Activated CD4-positive, alpha-beta memory T cell treated with anti-CD3 and anti-CD28 coated beads for 36 hours (primary cell): ENCODE measurements at regions of chr11 and their contacts with region 1.

Region 1: DNA sequence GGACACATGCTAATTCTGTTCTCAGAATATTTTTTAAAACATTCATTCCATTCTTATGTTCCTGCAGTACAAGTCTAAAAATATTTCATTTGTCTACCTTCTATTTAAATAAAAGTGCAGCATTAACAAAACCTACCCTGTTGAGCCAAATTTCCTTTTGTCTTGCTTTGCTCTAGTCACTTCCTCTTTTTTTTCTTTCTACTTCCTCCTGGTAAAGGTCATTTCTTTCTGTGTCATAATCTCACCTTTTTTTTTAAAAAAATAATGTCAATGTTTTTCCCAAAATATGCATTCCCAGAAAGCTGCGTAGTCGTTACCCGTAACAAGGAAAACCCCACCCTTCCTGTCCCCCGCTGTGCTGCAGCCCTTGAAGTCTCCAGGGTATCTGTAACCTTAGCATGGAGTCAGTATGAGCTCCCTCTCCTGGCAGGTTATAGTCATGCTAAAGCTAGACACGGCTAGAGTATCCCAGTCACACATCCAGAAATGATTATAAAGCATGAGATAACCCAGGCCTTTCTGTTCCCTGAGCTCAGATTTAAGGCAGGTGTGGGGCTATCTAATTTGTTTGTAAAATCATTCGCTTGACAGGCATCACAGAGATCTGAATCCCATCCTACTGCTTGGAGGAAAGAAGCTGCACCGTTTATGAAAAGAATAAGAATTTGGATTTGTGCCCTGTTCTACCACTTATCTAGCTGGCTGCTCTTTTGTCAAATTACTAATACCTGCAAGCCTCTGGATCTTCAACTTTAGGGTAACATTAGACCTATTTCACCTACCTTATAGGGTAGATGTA is 51.1 kb upstream of the EED start:
- DNase-seq: peak; percentile 72
- H3K4me3 Mint-ChIP-seq: peak overlapping the region; percentile 60
- H3K27ac Mint-ChIP-seq: peak overlapping the region; percentile 64
- H3K4me1 Mint-ChIP-seq: peaks cover 33% of the 10 kb centered on the region
- H3K27me3 Mint-ChIP-seq: peaks cover 6% of the 10 kb centered on the region

Region 2: DNA sequence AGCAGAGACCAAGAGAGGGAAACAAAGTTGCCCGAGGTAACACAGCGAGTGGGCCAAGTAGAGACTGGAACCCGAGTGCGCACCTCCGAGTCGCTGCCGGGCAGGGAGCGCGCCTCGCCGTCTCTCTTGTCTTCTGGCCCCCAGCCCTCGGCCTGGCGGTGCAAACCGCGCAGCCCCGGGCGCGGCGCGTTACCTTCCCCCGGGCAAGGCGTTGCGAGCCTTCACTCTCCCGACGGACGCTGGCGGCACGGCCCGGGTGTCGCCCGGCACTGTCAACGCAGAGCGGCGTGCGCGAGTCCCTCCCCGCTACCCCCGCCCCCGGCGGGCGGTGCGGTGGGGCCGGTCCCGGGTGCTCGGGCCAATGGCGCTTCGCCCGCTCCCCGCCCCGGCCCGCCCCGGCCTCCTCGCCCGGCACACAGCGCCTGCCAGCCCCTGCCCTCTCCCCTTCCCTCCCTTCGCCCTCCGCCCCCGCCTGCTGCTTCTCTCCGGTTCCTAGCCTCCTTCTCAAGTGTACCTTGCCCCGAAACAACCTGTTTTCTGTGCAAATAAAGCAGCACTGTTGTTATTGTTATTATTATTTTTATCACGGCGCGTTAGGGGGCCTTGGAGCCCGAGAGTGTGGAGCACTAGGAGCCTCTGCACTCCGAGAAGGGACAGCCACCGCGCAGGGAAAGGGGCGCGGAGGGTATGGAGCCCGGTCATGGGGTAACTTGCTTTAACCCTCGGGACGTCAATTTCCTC is 382.5 kb before region 1 on chr11 and contains the start of gene SYTL2:
- CTCF ChIA-PET with region 1: no interaction called
- POLR2A ChIA-PET with region 1: no interaction called
- intact Hi-C with region 1: no loop called
- DNase-seq: peak; percentile 82
- H3K4me3 Mint-ChIP-seq: peak within 1 kb of the TSS; percentile 75
- H3K27ac Mint-ChIP-seq: peak within 1 kb of the TSS; percentile 42
- H3K4me1 Mint-ChIP-seq: peaks cover 28% of the 10 kb centered on the region
- H3K27me3 Mint-ChIP-seq: peaks cover 3% of the 10 kb centered on the region
- total RNA-seq, gene SYTL2: 10.2 TPM

Region 3: DNA sequence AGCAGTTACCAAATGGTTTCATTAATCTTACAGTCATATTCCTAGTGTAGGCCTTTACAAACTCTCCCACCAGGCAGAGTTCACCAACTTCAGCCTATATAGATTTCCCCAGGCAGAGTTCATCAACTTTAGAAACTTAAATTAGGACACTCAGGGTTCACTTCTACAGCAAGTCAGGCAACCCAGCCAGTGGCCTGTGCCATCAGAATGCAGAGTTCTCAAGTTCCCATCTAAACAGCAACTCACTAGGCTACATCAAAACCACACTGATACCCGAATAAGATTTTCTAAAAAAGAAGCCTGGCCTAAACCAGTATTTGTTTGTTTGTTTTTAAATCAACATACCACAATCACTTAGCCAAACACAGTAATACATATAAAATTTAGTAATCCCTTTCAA is 158.3 kb before region 1 on chr11:
- CTCF ChIA-PET with region 1: interaction called, 79 read pairs
- POLR2A ChIA-PET with region 1: no interaction called
- intact Hi-C with region 1: no loop called
- DNase-seq: no peak
- H3K4me3 Mint-ChIP-seq: no peak overlapping the region
- H3K27ac Mint-ChIP-seq: peak overlapping the region; percentile 34
- H3K4me1 Mint-ChIP-seq: peaks cover 50% of the 10 kb centered on the region
- H3K27me3 Mint-ChIP-seq: no peaks in the 10 kb centered on the region

Region 4: GRCh38 chr11:86047275-86047991 is 146.1 kb before region 1 on chr11:
- CTCF ChIA-PET with region 1: interaction called, 79 read pairs
- POLR2A ChIA-PET with region 1: interaction called, 5 read pairs
- intact Hi-C with region 1: loop called (anchors 1 kb)
- DNase-seq: peak; percentile 81
- H3K4me3 Mint-ChIP-seq: peak overlapping the region; percentile 60
- H3K27ac Mint-ChIP-seq: peak overlapping the region; percentile 99
- H3K4me1 Mint-ChIP-seq: peaks cover 93% of the 10 kb centered on the region
- H3K27me3 Mint-ChIP-seq: no peaks in the 10 kb centered on the region

Region 5: DNA sequence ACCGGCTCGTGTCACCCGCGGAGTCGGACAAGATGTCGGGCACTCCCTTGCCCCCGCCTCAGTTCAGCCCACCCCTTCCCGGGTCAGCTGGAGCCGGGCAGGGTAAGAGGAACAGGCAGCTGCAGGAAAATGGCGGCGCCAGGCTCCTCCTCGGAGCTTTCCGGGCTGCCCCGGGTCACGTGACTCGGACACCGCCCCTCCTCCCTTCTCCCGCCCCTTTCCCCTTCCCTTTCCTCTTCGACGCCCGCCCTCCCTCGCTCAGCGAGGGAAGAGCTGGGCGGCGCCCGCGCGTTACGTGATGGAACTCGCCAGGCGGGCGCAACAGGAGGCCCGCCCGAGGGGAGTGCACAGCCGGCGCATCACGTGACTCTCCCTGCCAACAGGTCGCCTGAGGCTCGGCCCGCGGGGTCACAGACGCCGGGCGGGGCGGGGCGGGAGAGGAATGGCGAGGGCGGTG is 124.5 kb before region 1 on chr11 and contains the start of gene PICALM:
- CTCF ChIA-PET with region 1: interaction called, 58 read pairs
- POLR2A ChIA-PET with region 1: interaction called, 8 read pairs
- intact Hi-C with region 1: loop called (anchors 1 kb)
- DNase-seq: peak; percentile 99
- H3K4me3 Mint-ChIP-seq: peak within 1 kb of the TSS; percentile 96
- H3K27ac Mint-ChIP-seq: peak within 1 kb of the TSS; percentile 88
- H3K4me1 Mint-ChIP-seq: peaks cover 25% of the 10 kb centered on the region
- H3K27me3 Mint-ChIP-seq: no peaks in the 10 kb centered on the region
- total RNA-seq, gene PICALM: 75.9 to 90.4 TPM

Region 6: GRCh38 chr11:86138958-86139357 is 54.5 kb before region 1 on chr11:
- CTCF ChIA-PET with region 1: interaction called, 3 read pairs
- POLR2A ChIA-PET with region 1: no interaction called
- intact Hi-C with region 1: loop called (anchors 5 kb)
- DNase-seq: peak; percentile 61
- H3K4me3 Mint-ChIP-seq: peak overlapping the region; percentile 20
- H3K27ac Mint-ChIP-seq: peak overlapping the region; percentile 70
- H3K4me1 Mint-ChIP-seq: peaks cover 45% of the 10 kb centered on the region
- H3K27me3 Mint-ChIP-seq: no peaks in the 10 kb centered on the region

Region 7: DNA sequence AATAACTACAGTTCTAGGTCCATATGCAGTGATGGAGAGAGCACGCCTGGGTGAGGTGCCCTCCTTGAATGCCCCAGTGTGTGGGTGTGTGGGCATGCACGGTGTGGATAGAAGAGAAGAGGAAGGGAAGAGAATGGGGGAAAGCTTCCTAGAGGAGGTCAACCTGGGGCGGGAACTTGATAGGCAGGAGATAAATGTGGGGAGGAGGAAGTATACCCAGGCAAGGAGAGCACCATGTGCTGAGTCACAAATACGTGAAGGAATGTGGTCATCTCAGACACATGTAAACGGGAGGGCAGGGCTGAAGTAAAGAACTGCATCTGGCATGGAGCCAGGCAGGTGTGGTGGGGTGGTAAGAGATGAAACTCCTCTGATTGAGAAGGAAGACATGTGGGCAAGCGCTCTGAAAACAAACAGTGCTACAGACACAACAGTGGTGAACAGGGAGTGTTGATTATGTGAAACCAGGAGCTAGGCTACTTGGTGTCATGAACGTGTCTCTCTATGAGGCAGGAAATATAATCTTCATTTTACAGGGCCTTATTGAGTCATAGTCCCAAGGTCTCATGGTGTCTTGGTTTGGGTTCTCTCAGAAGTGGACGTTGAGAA is 10.4 kb before region 1 on chr11:
- CTCF ChIA-PET with region 1: interaction called, 17 read pairs
- POLR2A ChIA-PET with region 1: no interaction called
- intact Hi-C with region 1: no loop called
- DNase-seq: peak; percentile 84
- H3K4me3 Mint-ChIP-seq: no peak overlapping the region
- H3K27ac Mint-ChIP-seq: no peak overlapping the region
- H3K4me1 Mint-ChIP-seq: peaks cover 9% of the 10 kb centered on the region
- H3K27me3 Mint-ChIP-seq: no peaks in the 10 kb centered on the region